ENCODE measurements at regions of chr12 and their contacts with region 1.

Region 1: DNA sequence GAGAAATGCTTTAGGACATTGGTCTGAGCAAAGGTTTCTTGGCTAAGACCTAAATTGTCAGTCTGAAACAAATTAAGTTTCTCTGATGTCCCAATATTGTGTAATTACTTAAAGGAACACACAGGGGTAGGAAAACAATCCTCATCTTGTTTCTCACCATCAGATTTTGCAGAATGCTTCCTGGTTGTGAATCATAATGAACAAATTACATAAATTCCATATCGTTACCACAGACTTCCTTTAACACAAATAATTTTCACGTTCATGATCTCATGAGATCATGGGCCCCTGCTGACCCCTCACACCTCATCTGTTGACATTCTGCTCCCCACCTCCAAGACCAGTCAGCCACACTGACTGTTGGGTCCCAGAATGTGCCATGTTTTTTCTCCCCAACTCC is 194.1 kb downstream of the MON2 start:
- DNase-seq: peak; percentile 73
- H3K4me3 Mint-ChIP-seq: no peak overlapping the region
- H3K27ac Mint-ChIP-seq: peak overlapping the region; percentile 98
- H3K4me1 Mint-ChIP-seq: peaks cover 40% of the 10 kb centered on the region
- H3K27me3 Mint-ChIP-seq: no peaks in the 10 kb centered on the region
- CTCF ChIP-seq: no peak

Region 2: DNA sequence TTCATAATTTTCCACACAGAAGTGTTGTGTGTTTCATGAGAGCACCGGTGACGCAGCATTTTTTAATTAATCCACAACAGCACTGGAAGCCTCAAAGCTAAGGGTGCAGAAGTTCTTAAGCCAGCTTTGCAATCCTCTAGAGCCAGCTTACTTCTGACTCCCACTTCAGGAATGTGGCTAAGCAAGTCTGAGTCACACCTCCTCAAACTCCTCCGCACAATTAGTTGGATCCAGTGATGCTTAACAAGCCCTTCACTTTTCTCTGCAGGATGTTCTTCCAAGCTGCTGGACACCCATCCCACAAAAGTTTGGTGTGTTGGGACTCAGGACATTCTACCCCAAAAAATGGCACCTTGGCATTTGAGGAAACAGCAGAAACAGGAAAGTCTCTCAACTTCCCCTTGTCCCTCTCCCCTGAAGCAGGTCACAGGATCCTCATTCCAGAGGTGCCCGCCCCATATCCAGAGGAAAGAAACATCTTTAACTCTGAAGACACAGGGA is 64.2 kb after region 1 on chr12:
- CTCF ChIA-PET with region 1: interaction called, 3 read pairs
- intact Hi-C with region 1: loop called (anchors 2 kb)
- DNase-seq: peak; percentile 88
- H3K4me3 Mint-ChIP-seq: peak overlapping the region; percentile 44
- H3K27ac Mint-ChIP-seq: peak overlapping the region; percentile 81
- H3K4me1 Mint-ChIP-seq: peaks cover 68% of the 10 kb centered on the region
- H3K27me3 Mint-ChIP-seq: no peaks in the 10 kb centered on the region
- CTCF ChIP-seq: no peak

Region 3: GRCh38 chr12:62750941-62751809 is 90.4 kb after region 1 on chr12:
- CTCF ChIA-PET with region 1: no interaction called
- intact Hi-C with region 1: loop called (anchors 5 kb)
- DNase-seq: peak; percentile 67
- H3K4me3 Mint-ChIP-seq: peak overlapping the region; percentile 23
- H3K27ac Mint-ChIP-seq: peak overlapping the region; percentile 90
- H3K4me1 Mint-ChIP-seq: peaks cover 31% of the 10 kb centered on the region
- H3K27me3 Mint-ChIP-seq: no peaks in the 10 kb centered on the region
- CTCF ChIP-seq: no peak

Region 4: DNA sequence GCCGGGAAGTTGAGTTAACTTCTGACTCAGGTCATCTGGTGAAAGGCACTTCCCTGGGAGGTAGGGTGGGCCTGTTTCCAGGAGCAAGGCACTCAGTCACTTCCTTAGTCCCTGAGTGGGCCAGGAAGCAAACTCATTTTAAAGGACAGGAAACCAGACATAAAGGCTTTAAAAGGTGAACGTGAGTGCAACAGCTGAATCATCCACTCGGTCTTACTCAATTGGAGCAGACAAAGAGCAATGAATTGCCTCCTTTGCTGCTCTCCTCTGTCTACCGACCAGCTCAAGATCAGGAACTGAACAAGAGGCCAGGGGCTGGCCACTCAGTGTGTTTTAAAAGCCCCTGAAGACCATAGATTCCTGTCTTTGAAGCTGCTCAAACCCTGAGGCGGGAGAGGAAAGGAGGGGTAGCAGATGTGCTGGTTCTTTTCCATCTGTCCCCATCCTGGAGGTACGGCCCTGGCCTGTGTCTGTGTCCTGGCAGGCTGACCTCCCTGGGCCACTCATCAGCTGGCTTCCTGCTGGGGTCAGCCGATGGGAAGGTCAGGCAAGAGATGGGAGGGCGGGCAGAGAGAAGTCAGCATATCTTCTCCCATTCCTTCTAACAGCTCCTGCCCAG is 125.3 kb after region 1 on chr12:
- CTCF ChIA-PET with region 1: no interaction called
- intact Hi-C with region 1: loop called (anchors 2 kb)
- DNase-seq: peak; percentile 77
- H3K4me3 Mint-ChIP-seq: peak overlapping the region; percentile 8
- H3K27ac Mint-ChIP-seq: peak overlapping the region; percentile 93
- H3K4me1 Mint-ChIP-seq: peaks cover 33% of the 10 kb centered on the region
- H3K27me3 Mint-ChIP-seq: no peaks in the 10 kb centered on the region
- CTCF ChIP-seq: no peak